ENCODE measurements at regions of chr1 and their contacts with region 1.

Region 1: GRCh38 chr1:10430216-10431069 is at the start of gene CENPS:
- DNase-seq: peak; percentile 79
- H3K4me3 Mint-ChIP-seq: peak within 1 kb of the TSS; percentile 93
- H3K27ac Mint-ChIP-seq: peak within 1 kb of the TSS; percentile 93
- H3K4me1 Mint-ChIP-seq: peaks cover 21% of the 10 kb centered on the region
- H3K27me3 Mint-ChIP-seq: no peaks in the 10 kb centered on the region
- total RNA-seq, gene CENPS: 21.5 to 23.4 TPM

Region 2: DNA sequence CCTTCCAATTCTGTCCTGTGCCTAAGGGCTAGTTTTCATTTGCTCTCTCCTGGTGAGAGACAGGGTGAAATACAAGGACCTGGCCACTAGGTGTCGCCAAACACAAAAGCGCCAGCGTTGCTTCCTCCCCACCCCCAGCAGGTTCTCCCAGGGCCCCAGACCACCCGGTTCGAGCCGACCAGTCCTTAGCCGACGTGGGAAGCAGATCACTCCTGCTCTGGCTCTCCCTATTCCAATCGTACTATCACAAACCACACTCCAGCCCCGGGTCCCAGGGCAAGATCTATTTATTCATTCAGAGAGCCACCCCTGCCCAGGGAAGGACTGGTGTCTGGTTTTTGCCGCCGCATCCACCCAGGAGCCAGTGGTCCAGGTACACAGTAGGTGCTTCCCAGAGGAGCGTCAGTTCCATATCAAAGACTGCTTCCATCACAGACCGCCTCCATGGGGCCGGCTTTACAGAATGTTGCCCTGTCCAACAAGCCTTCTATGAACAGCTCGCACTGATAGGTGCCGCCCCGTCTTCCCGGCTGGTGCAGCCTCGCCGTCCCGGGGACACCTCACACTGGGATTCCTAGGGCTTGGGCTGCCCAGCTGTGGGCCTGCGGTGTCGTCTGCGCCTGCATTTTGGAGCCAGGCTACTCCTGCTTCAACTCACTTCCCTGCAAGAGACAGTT is 555.3 kb before region 1 on chr1:
- CTCF ChIA-PET with region 1: interaction called, 4 read pairs
- intact Hi-C with region 1: loop called (anchors 1 kb)
- DNase-seq: peak; percentile 84
- H3K4me3 Mint-ChIP-seq: no peak overlapping the region
- H3K27ac Mint-ChIP-seq: no peak overlapping the region
- H3K4me1 Mint-ChIP-seq: no peaks in the 10 kb centered on the region
- H3K27me3 Mint-ChIP-seq: no peaks in the 10 kb centered on the region

Region 3: DNA sequence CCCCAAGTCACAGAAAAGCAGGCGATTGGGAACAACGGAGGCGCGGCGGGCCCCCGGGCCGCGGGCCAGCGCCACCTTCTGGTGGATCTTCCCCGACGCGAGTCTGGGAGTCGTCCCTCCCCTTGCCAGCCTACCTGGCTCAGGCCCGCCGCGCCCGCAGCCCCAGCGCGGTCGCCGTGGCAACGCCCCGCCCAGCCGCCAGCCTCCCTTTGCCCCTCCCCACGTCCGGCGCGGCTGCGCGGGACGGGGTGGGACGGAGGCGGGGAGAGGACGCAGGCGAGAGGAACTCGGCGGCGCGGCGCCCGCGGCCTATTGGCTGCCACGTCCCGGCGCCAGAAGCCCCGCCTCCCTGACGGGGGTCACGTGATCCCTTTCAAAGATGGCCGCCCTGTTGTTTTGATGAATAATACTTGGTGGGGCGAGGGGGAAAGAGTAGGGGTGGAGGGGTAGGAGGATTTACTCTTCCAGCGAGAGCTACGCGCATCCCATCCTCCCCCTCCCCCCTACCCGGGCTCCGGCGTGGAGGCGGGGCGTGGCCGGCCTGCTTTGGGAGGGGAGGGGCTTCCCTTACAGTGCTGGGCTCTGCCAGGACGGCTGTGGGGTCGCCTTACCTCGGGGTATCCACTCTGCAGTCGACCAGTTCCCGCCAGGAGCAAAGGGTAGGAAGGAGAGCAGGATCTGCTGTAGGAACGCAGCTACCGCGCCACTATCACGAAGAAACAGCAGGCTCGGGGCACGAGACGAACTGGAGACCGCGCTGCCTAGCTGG is 397.7 kb before region 1 on chr1 and contains the start of gene UBE4B:
- CTCF ChIA-PET with region 1: no interaction called
- intact Hi-C with region 1: loop called (anchors 1 kb)
- DNase-seq: peak; percentile 98
- H3K4me3 Mint-ChIP-seq: peak within 1 kb of the TSS; percentile 94
- H3K27ac Mint-ChIP-seq: peak within 1 kb of the TSS; percentile 88
- H3K4me1 Mint-ChIP-seq: peaks cover 24% of the 10 kb centered on the region
- H3K27me3 Mint-ChIP-seq: no peaks in the 10 kb centered on the region
- total RNA-seq, gene UBE4B: 20.1 to 21.3 TPM

Region 4: GRCh38 chr1:10209905-10210810 is 220.3 kb before region 1 on chr1 and contains the start of gene KIF1B:
- CTCF ChIA-PET with region 1: interaction called, 7 read pairs
- intact Hi-C with region 1: loop called (anchors 1 kb)
- DNase-seq: peak; percentile 95
- H3K4me3 Mint-ChIP-seq: peak within 1 kb of the TSS; percentile 83
- H3K27ac Mint-ChIP-seq: peak within 1 kb of the TSS; percentile 69
- H3K4me1 Mint-ChIP-seq: peaks cover 29% of the 10 kb centered on the region
- H3K27me3 Mint-ChIP-seq: no peaks in the 10 kb centered on the region
- total RNA-seq, gene KIF1B: 6.1 to 6.2 TPM

Region 5: GRCh38 chr1:10398734-10399623 is 31.5 kb before region 1 on chr1 and contains the start of gene PGD:
- CTCF ChIA-PET with region 1: no interaction called
- intact Hi-C with region 1: loop called (anchors 1 kb)
- DNase-seq: peak; percentile 98
- H3K4me3 Mint-ChIP-seq: peak within 1 kb of the TSS; percentile 83
- H3K27ac Mint-ChIP-seq: no peak within 1 kb of the TSS
- H3K4me1 Mint-ChIP-seq: peaks cover 25% of the 10 kb centered on the region
- H3K27me3 Mint-ChIP-seq: no peaks in the 10 kb centered on the region
- total RNA-seq, gene PGD: 94.8 to 101 TPM

Region 6: DNA sequence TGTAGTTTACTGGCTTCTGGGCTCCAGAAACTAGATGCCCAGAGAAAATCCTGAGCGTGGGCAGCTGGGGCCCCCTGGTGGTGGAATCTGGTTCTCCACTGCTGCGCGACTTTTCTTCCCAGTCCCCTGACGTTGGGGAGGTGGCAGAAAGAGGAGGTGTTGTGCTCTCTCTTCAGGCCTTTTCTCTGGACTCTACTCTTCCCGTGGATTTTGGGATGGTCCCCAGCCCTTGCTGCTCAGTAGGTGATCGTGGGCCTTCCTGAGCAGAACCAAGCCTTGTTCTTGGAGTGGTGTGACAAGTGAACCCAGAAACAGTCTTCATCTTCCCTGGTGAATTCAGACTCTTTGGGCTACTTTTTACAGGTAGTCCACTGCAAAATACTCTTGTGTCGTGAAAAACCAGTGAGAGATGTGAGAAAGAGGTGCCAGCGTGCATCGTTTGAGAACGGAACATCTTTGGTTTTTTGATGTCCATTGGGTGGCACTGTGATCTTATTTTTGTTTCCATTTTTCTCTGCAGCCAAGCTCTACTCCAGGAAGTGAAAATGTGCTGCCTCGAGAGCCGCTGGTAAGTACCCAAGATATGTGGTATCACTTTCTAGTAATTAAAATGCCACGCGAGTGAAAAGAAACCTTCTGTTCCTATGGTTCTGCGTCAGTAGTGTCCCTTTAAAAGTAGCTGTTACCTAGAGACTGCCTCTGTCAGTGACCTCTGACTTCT is 64.5 kb after region 1 on chr1:
- CTCF ChIA-PET with region 1: interaction called, 46 read pairs
- intact Hi-C with region 1: loop called (anchors 1 kb)
- DNase-seq: peak; percentile 90
- H3K4me3 Mint-ChIP-seq: peak overlapping the region; percentile 67
- H3K27ac Mint-ChIP-seq: peak overlapping the region; percentile 87
- H3K4me1 Mint-ChIP-seq: peaks cover 38% of the 10 kb centered on the region
- H3K27me3 Mint-ChIP-seq: no peaks in the 10 kb centered on the region

Measured in activated naive CD4-positive, alpha-beta T cell treated with anti-CD3 and anti-CD28 coated beads for 36 hours (primary cell).